GM13976 (cell line): ENCODE measurements at regions of chr1 and their contacts with region 1.

Region 1: GRCh38 chr1:211133836-211134669 is at the start of gene KCNH1:
- DNase-seq: peak; percentile 89
- CTCF ChIP-seq: peak; percentile 65

Region 2: DNA sequence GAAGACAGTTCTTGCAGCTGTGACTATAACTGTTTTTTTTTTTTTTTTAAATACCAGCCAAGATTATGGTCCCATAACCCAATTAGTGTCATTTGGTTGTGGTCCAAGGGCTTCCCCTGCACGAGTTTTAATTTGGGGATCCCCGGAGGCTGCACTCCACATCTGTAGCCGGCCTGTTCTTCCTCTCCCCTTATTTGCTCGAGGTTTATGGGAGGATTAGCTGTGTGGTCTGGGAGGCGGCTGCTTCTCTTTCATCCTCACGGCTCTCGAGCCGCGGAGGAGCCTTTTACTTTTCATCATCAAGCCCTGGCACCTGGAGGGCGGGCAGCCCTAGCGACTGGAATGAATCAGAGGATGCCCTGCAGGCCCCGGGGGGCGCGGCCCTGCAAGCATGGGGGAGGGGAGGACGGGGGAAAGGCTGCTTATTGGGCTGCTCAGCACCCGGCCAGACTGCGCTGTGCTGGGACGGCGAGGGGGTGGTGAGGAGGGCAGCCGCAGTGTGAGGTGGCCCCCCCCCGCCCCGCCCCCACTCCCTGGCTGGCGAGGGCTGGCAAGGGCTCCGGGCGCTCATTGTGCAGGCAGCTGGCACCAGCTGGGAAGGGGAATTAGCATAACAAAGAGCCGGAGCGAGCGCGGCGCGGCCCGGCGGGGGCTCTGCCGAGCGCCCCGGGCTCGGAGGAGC is 882.9 kb before region 1 on chr1:
- in situ Hi-C with region 1: no loop called
- DNase-seq: peak; percentile 45
- CTCF ChIP-seq: no peak

Region 3: DNA sequence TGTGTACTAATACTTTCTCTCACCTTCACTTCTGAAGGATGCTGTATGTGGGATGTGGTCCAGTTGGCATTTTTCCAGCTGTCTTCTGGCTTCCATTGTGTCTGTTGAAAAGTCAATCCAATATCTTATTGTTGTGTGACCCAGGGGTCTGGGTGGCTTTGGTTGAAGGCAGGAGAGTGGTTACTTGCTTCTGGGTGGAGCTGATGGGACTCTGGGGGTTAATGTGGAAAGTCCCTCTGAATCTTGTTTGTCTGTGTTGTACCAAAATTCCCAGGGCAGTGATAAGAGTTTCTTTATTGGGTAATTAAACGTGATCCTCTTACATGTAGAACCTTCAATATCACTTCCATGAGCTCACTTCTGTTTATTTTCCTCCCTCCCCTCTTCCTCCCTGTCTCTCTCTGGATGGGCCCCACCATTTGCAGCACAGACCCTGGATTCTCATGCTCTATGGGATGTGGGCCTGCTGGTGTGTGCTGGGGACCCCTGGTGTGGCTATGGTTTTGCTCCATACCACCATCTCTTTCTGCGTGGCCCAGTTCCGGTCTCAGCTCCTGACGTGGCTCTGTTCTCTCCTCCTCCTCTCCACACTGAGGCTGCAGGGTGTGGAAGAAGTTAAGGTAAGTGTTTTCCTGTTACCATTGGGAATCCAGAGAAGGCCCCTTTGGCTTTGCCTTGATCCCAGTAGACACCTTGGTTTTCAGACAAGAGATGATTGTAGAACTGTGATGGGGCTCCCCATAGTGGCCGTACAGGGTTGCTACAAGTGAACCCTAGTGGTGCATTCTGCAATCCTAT is 733.8 kb before region 1 on chr1:
- in situ Hi-C with region 1: loop called (anchors 25 kb)
- DNase-seq: peak; percentile 65
- CTCF ChIP-seq: peak; percentile 78

Region 4: DNA sequence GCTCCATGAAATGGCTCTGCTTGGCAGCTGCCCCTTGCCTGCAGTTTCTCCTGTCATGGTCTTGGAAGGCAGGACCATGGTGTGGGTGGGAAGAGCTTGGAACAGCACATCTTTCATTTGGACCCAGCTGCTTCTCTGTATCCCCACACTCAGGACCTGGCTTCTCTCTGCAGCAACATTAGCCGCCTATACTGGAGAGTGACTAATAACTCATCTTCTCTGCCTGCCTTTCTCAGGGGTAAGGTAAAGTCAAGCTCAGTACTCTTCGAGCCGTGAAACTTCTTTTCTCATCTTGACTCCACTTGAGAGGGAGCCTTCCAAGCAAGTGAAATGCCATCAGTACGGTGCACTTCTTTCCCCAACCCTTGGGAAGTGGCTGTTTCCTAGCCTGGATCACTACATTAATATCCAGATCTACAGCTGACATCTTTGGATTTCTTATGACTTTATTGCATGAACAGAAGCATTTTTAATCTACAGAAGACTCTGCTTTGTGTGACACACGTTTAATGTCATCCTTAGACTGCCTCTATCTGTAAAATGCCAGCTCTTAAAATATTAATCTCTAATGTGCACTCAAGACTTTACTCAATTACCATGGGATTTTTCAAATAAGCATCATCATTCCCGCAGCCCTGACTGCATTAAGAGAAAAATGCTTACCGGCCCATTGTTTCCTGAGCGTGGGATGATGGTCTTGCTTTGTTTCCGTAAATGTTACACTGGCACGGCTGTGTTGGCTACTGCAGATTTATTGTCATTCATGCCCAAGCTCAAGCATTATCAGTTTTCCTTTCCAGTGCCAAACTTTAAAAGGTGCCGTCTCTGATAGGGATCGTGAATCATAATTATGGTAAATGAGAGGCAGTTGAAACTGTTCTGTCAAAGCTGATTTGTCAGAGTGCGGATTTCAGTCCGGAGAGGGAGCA is 562.4 kb before region 1 on chr1:
- in situ Hi-C with region 1: loop called (anchors 10 kb)
- DNase-seq: no peak
- CTCF ChIP-seq: no peak

Region 5: GRCh38 chr1:210624722-210625121 is 509.3 kb before region 1 on chr1:
- in situ Hi-C with region 1: no loop called
- DNase-seq: no peak
- CTCF ChIP-seq: no peak